ENCODE measurements at regions of chr3 and their contacts with region 1.

Region 1: GRCh38 chr3:168165390-168166269 is 69.9 kb upstream of the GOLIM4 start:
- DNase-seq: peak; percentile 56
- ATAC-seq: peak; percentile 42
- H3K4me3 Mint-ChIP-seq: no peak overlapping the region
- H3K27ac Mint-ChIP-seq: no peak overlapping the region
- H3K4me1 Mint-ChIP-seq: no peaks in the 10 kb centered on the region
- H3K27me3 Mint-ChIP-seq: no peaks in the 10 kb centered on the region

Region 2: DNA sequence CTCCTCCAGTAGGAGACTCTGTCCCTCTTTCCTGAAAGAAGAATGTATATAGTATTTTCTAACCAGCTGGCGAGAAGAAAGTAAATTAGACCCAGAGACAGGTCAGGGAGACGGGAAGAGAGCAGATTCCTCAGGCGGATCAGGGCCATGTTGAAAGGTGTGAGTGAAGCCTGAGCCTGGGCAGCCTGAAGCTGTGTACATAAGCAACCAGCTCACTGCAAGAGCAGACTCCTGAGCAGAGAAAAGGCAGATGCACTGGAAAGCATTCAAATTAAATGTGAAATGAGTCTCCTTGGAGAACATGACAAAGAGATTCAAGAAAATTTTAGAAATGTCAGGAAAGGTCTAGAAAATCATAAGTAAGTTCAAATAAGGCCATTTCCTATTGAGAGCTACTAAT is 235.7 kb before region 1 on chr3:
- CTCF ChIA-PET with region 1: no interaction called
- POLR2A ChIA-PET with region 1: no interaction called
- intact Hi-C with region 1: loop called in 1 of 2 experiments (anchors 10 kb)
- DNase-seq: no peak
- ATAC-seq: no peak
- H3K4me3 Mint-ChIP-seq: no peak overlapping the region
- H3K27ac Mint-ChIP-seq: no peak overlapping the region
- H3K4me1 Mint-ChIP-seq: no peaks in the 10 kb centered on the region
- H3K27me3 Mint-ChIP-seq: no peaks in the 10 kb centered on the region

Region 3: GRCh38 chr3:168186293-168186983 is 20.8 kb after region 1 on chr3:
- CTCF ChIA-PET with region 1: interaction called, 12 read pairs
- POLR2A ChIA-PET with region 1: no interaction called
- intact Hi-C with region 1: no loop called
- DNase-seq: no peak
- ATAC-seq: no peak
- H3K4me3 Mint-ChIP-seq: no peak overlapping the region
- H3K27ac Mint-ChIP-seq: no peak overlapping the region
- H3K4me1 Mint-ChIP-seq: no peaks in the 10 kb centered on the region
- H3K27me3 Mint-ChIP-seq: no peaks in the 10 kb centered on the region

Region 4: DNA sequence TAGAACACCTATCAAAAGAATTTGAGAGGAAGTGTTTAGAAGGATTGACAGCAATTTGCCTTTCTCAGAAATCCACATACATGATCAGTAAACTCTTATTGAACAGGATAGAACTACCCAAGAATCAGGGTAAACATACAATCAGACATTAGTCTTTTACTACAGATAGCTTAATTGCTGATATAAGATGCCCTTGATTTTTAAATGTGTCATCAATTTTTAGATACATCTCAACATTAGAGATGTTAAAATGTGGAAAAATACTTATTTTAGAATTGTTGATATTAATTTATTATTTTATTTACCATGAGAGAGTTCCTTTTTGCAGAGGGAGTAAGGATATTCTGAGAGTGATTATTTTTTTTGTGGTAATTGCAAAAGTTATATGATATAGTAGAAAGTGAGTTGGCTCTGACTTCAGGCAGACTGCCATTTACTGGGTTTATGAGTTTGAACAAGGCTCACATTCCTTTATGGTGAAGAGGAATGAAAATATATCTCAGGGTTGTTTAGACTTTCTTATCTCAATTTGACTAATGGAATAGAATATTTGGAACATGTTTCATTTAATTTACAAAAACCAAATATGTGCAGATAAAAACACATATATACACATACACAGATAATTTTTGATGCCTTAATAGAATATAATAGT is 232.9 kb after region 1 on chr3:
- CTCF ChIA-PET with region 1: no interaction called
- POLR2A ChIA-PET with region 1: no interaction called
- intact Hi-C with region 1: no loop called
- DNase-seq: no peak
- ATAC-seq: no peak
- H3K4me3 Mint-ChIP-seq: no peak overlapping the region
- H3K27ac Mint-ChIP-seq: no peak overlapping the region
- H3K4me1 Mint-ChIP-seq: no peaks in the 10 kb centered on the region
- H3K27me3 Mint-ChIP-seq: no peaks in the 10 kb centered on the region